ENCODE measurements at regions of chr19 and their contacts with region 1.

Region 1: GRCh38 chr19:53195265-53195903 is 2.2 kb upstream of the ZNF665 start:
- DNase-seq: peak; percentile 85
- H3K4me3 Mint-ChIP-seq: peak overlapping the region; percentile 21
- H3K27ac Mint-ChIP-seq: peak overlapping the region; percentile 11
- H3K4me1 Mint-ChIP-seq: peaks cover 32% of the 10 kb centered on the region
- H3K27me3 Mint-ChIP-seq: no peaks in the 10 kb centered on the region

Region 2: GRCh38 chr19:51703575-51704515 is 1491.5 kb before region 1 on chr19:
- CTCF ChIA-PET with region 1: no interaction called
- POLR2A ChIA-PET with region 1: no interaction called
- intact Hi-C with region 1: loop called (anchors 10 kb)
- DNase-seq: peak; percentile 97
- H3K4me3 Mint-ChIP-seq: peak overlapping the region; percentile 92
- H3K27ac Mint-ChIP-seq: peak overlapping the region; percentile 89
- H3K4me1 Mint-ChIP-seq: peaks cover 32% of the 10 kb centered on the region
- H3K27me3 Mint-ChIP-seq: peaks cover 2% of the 10 kb centered on the region

Region 3: GRCh38 chr19:53086949-53087348 is 108.4 kb before region 1 on chr19:
- CTCF ChIA-PET with region 1: no interaction called
- POLR2A ChIA-PET with region 1: no interaction called
- intact Hi-C with region 1: no loop called
- DNase-seq: no peak
- H3K4me3 Mint-ChIP-seq: no peak overlapping the region
- H3K27ac Mint-ChIP-seq: no peak overlapping the region
- H3K4me1 Mint-ChIP-seq: no peaks in the 10 kb centered on the region
- H3K27me3 Mint-ChIP-seq: no peaks in the 10 kb centered on the region

Region 4: GRCh38 chr19:53158119-53158656 is 37.2 kb before region 1 on chr19:
- CTCF ChIA-PET with region 1: no interaction called
- POLR2A ChIA-PET with region 1: no interaction called
- intact Hi-C with region 1: loop called (anchors 1 kb)
- DNase-seq: peak; percentile 62
- H3K4me3 Mint-ChIP-seq: peak overlapping the region; percentile 81
- H3K27ac Mint-ChIP-seq: peak overlapping the region; percentile 80
- H3K4me1 Mint-ChIP-seq: peaks cover 15% of the 10 kb centered on the region
- H3K27me3 Mint-ChIP-seq: no peaks in the 10 kb centered on the region

Region 5: GRCh38 chr19:53333463-53334449 is 138.4 kb after region 1 on chr19 and contains the start of gene ZNF845:
- CTCF ChIA-PET with region 1: no interaction called
- POLR2A ChIA-PET with region 1: no interaction called
- intact Hi-C with region 1: loop called (anchors 1 kb)
- DNase-seq: peak; percentile 98
- H3K4me3 Mint-ChIP-seq: peak within 1 kb of the TSS; percentile 94
- H3K27ac Mint-ChIP-seq: peak within 1 kb of the TSS; percentile 87
- H3K4me1 Mint-ChIP-seq: peaks cover 11% of the 10 kb centered on the region
- H3K27me3 Mint-ChIP-seq: peaks cover 7% of the 10 kb centered on the region
- total RNA-seq, gene ZNF845: 5.7 to 5.8 TPM

Region 6: DNA sequence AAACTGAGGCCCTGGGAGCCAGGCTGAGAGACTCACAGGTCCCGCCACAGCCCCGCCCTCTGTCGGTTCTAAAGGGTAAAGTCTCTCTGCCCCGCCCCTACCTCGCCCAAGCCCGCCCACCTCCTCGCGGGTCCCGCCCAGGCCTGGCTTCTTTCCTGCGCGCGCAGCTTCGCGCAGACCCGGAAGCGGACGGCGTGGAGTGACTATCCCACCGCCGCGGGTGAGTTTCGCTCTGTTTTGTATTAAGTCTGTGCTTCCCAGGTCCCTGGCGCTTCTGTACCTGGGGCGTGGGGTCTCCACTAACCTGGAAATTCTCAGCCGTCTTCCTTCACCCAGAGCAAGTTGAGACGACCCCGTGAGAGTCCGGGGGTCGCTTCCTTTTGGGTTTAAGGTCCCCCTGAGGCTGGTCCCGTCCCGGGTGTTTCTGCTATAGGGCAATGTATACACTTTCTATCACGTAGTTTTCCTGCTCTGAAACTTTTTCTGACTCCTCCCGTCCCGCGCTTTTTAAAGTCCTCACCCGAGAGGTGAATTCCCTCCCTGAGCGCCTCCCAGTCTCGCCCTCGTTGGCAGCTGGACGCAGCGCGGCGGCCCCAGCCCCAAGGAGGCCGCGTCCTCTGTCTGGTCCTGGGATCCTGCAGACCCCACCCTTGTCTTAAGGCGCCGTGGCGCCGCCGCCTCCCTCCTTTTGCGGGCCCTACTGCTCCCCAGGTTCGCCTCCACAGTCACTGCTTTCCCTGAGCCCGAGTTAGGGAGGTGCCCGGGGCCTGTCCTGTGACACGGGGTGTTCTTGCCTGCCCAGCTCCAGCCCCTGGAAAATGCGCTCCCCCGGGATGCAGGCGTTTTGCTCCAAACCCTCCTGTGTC is 199.8 kb after region 1 on chr19 and contains the start of gene ZNF765:
- CTCF ChIA-PET with region 1: interaction called, 7 read pairs
- POLR2A ChIA-PET with region 1: interaction called, 3 read pairs
- intact Hi-C with region 1: loop called (anchors 1 kb)
- DNase-seq: peak; percentile 98
- H3K4me3 Mint-ChIP-seq: peak within 1 kb of the TSS; percentile 90
- H3K27ac Mint-ChIP-seq: peak within 1 kb of the TSS; percentile 80
- H3K4me1 Mint-ChIP-seq: peaks cover 19% of the 10 kb centered on the region
- H3K27me3 Mint-ChIP-seq: no peaks in the 10 kb centered on the region
- total RNA-seq, gene ZNF765: 8.2 to 8.7 TPM

Region 7: DNA sequence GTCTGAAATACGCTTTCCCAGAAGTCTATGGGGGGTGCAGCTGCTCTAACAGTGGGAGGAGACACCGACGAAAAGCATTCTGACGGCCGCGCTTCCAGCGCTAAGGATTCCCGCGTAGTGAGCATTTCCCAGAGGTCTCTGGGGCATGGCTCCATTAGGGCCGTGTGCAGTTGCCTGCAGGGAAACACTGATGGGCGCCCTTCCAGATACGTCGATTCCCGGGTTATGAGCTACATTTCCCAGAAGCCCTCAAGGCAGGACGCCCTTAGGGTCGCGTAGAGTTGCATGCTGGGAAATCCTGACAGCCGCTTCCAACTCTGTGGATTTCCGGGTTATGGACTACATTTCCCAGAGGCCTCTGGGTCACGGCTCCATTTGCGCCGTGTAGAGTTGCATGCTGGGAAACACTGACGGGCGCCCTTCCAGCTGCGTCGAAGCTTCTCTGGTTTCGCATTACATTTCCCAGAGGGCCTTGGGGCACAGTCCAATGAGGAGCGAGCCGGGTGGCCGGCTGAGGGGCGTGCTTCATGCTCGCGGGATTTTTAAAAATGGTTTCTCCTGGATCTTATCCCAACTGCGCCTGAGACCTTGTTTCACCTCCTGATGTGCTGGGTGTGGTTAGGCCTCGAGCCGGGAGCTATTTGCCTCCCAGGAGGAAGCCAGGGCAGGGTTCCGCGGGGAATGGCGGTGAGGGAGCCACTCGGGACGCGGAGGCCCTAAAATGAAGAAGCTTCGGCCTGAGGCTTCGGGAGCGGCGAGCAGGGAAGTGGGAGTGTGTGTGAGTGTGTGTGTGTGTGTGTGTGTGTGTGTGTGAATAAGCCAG is 325.4 kb after region 1 on chr19:
- CTCF ChIA-PET with region 1: no interaction called
- POLR2A ChIA-PET with region 1: no interaction called
- intact Hi-C with region 1: loop called (anchors 5 kb)
- DNase-seq: peak; percentile 93
- H3K4me3 Mint-ChIP-seq: peak overlapping the region; percentile 99
- H3K27ac Mint-ChIP-seq: peak overlapping the region; percentile 89
- H3K4me1 Mint-ChIP-seq: peaks cover 19% of the 10 kb centered on the region
- H3K27me3 Mint-ChIP-seq: no peaks in the 10 kb centered on the region

Measured in activated CD4-positive, alpha-beta memory T cell treated with anti-CD3 and anti-CD28 coated beads for 36 hours (primary cell).